ENCODE measurements at regions of chr11 and their contacts with region 1.

Region 1: DNA sequence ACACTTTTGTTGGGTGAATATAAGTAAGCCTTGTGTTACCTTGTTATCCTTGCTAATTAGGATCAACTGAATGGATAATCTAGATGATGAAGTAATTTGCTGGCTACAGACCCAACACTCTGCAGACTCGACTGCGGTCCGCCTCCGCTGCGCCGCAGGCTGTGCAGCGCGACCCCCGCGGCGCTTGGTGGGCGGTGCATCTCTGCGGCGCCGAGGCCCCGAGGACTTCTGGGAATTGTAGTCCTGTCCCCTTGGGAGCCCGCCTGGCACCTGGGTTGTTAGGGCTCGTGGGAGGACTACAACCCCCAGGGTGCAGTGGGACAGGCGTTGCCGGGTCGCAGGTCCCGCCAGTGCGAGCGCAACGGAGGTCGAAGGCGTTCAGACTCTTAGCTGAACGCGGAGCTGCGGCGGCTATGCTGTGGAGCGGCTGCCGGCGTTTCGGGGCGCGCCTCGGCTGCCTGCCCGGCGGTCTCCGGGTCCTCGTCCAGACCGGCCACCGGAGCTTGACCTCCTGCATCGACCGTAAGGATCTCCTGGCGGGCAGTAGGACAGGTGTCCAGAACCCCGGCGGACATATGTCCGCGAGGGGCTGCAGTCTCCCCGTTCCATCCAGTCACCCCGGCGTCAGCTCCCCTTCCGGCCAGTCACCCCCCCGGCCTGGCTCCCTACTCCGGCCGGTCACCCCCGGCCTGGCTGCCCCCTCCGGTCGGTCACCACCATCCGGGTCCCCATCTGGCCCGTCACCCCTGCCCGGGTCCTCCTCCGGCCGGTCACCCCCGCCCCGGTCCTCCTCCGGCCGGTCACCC is at the starts of genes ACAD8 and THYN1:
- DNase-seq: peak; percentile 98
- ATAC-seq: peak; percentile 100
- H3K4me3 ChIP-seq: peak within 1 kb of the TSS; percentile 62 to 99
- H3K27ac ChIP-seq: peak within 1 kb of the TSS in 1 of 2 donors; percentile 48
- H3K4me1 ChIP-seq: peaks cover 0 to 5% of the 10 kb centered on the region in 2 donors
- H3K27me3 ChIP-seq: no peaks in the 10 kb centered on the region
- total RNA-seq, gene ACAD8: 16.7 to 25.3 TPM
- total RNA-seq, gene THYN1: 28.3 to 33.9 TPM

Region 2: GRCh38 chr11:134068829-134069425 is 184.5 kb before region 1 on chr11 and contains the start of gene JAM3:
- intact Hi-C with region 1: no loop called
- DNase-seq: peak; percentile 97 to 99
- ATAC-seq: peak; percentile 97
- H3K4me3 ChIP-seq: peak within 1 kb of the TSS; percentile 65 to 73
- H3K27ac ChIP-seq: peak within 1 kb of the TSS; percentile 59 to 64
- H3K4me1 ChIP-seq: peaks cover 0 to 2% of the 10 kb centered on the region in 2 donors
- H3K27me3 ChIP-seq: no peaks in the 10 kb centered on the region
- total RNA-seq, gene JAM3: 94.9 to 102 TPM

Region 3: GRCh38 chr11:134331354-134332188 is 78.2 kb after region 1 on chr11 and contains the start of gene GLB1L2:
- intact Hi-C with region 1: loop called in 1 of 2 experiments (anchors 5 kb)
- DNase-seq: peak; percentile 80 to 90
- ATAC-seq: peak; percentile 90
- H3K4me3 ChIP-seq: peak within 1 kb of the TSS; percentile 30 to 66
- H3K27ac ChIP-seq: no peak within 1 kb of the TSS
- H3K4me1 ChIP-seq: no peaks in the 10 kb centered on the region
- H3K27me3 ChIP-seq: no peaks in the 10 kb centered on the region
- total RNA-seq, gene GLB1L2: 0.94 to 1.5 TPM